GM12878 (cell line): ENCODE measurements at regions of chr12 and their contacts with region 1.

Region 1: DNA sequence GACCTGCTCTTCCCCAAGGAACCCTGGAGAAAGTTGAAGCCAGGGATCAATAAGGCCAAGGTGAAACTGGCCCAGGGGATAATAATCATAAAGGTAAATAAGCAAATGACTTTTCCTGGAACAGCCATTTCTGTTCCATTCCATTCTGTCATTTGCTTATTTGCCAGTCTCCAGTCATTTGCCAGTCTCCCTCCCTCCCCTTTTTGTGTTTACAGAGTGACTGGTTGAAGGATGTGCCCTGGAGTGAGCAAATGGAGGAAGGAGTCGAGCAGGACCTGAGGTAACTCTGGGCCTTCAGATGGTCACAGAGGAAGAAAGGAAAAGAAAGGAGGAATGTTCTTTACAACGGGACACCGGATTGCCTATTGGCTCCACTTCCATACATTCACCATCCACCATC is 17.8 kb upstream of the DCD start:
- DNase-seq: no peak
- ATAC-seq: no peak
- H3K4me3 ChIP-seq: no peak overlapping the region
- H3K27ac ChIP-seq: no peak overlapping the region
- H3K4me1 ChIP-seq: peaks cover 6% of the 10 kb centered on the region; the same call in 1 of the 2 replicates
- H3K27me3 ChIP-seq: no peaks in the 10 kb centered on the region
- CTCF ChIP-seq: no peak
- EP300 ChIP-seq: no peak
- POLR2A ChIP-seq: no peak
- RAD21 ChIP-seq: no peak

Region 2: DNA sequence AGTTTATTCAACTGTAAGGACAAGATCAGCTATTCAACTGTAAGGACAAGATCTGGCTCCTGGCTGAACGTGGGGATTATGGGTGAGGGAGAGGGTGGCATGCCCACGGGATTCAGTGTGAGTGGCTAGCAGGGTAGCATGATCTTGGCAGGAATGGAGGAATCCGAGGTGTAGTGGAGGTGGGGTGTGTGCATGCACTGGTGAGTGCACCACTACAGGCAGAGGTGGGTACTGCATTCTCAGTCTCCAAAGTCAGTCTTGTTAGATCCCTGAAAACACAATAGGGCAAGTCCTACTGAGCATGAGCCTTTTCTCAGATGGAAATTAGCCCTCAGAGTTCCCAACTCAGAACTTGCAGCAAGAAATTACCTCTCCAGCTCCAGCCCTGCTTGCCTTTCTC is 14.4 kb after region 1 on chr12:
- CTCF ChIA-PET with region 1: interaction called, 12 read pairs
- POLR2A ChIA-PET with region 1: no interaction called
- RAD21 ChIA-PET with region 1: no interaction called
- SMC1A ChIA-PET with region 1: no interaction called
- in situ Hi-C with region 1: no loop called
- intact Hi-C with region 1: no loop called
- DNase-seq: no peak
- ATAC-seq: peak; percentile 94
- H3K4me3 ChIP-seq: no peak overlapping the region
- H3K27ac ChIP-seq: no peak overlapping the region
- H3K4me1 ChIP-seq: no peaks in the 10 kb centered on the region
- H3K27me3 ChIP-seq: no peaks in the 10 kb centered on the region; a peak in 2 of 4 replicates
- CTCF ChIP-seq: peak; percentile 45 to 75 (median 55)
- EP300 ChIP-seq: no peak
- POLR2A ChIP-seq: no peak
- RAD21 ChIP-seq: no peak